PC-3 (cell line): ENCODE measurements at regions of chr14 and their contacts with region 1.

Region 1: DNA sequence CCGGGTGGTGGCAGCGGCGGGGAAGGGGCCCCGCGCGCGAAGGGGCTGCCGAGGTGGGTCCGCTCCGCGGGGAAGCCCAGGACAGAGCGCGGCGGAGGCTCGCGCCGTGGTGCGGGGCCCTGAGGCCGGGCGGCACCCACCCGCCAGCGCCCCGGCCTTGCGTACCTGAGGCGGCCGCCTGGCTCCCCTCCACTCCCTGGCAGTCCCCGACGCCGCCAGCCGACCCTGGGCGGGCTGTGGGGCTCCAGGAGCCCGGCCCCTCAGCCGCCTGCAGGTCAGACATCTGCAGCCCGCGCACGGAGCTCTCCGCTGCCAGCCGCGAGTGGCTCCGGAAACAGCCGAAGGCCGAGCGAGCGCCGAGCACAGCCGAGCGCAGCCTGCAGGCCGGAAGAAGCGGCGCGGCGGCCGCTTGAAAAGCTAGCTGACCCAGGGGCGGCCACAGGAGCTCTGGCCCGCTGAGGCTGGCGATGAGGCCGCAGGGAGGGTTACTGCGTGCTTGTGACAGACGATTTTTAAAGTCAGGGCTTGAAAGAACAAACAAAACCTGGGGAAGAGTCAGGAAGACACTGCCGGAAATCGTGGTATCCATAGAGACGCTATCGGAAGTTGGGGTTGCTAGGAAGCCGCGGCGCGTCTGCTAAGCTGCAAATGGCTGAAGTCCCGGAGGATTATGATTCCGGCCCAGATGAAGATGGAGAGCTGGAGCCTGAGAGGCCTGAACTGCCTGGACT is at the starts of genes SAMD15 and TMED8:
- DNase-seq: peak; percentile 94
- ATAC-seq: peak; percentile 97
- H3K4me3 ChIP-seq: peak within 1 kb of the TSS; percentile 92
- H3K27ac ChIP-seq: peak within 1 kb of the TSS; percentile 51
- H3K4me1 ChIP-seq: peaks cover 27% of the 10 kb centered on the region
- H3K27me3 ChIP-seq: no peaks in the 10 kb centered on the region
- CTCF ChIP-seq: peak; percentile 37; the same call in 1 of the 2 replicates
- total RNA-seq, gene SAMD15: 1.2 and 6.2 TPM in 2 replicates
- total RNA-seq, gene TMED8: 16.8 and 17.8 TPM in 2 replicates

Region 2: DNA sequence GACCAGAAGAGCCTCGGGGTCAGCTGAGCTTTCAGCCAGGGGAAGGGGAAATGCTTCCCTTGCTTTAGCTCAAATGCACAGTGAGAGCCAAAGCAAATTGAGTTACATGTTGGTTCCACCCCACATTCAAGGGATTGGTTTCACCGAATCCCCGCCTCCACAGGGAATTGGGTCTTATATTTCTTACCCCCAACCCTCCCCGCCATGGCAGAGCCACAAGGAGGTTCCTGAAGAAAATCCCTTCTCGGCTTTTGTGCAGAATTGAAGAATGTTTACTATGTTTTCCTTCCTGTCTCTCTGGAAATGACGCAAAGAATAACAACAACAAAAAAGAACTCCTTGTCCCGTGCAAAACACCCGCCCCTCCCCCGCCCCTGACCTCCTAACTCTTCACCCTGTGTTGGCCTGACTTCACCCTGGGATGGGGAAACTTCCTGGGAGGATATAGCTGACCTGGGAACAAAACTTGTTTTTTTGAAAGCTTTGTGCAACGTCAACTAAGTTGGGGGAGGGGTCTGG is 300.8 kb before region 1 on chr14:
- CTCF ChIA-PET with region 1: no interaction called
- POLR2A ChIA-PET with region 1: no interaction called
- intact Hi-C with region 1: no loop called
- DNase-seq: no peak
- ATAC-seq: no peak
- H3K4me3 ChIP-seq: no peak overlapping the region
- H3K27ac ChIP-seq: no peak overlapping the region
- H3K4me1 ChIP-seq: peaks cover 18% of the 10 kb centered on the region
- H3K27me3 ChIP-seq: no peaks in the 10 kb centered on the region
- CTCF ChIP-seq: no peak

Region 3: DNA sequence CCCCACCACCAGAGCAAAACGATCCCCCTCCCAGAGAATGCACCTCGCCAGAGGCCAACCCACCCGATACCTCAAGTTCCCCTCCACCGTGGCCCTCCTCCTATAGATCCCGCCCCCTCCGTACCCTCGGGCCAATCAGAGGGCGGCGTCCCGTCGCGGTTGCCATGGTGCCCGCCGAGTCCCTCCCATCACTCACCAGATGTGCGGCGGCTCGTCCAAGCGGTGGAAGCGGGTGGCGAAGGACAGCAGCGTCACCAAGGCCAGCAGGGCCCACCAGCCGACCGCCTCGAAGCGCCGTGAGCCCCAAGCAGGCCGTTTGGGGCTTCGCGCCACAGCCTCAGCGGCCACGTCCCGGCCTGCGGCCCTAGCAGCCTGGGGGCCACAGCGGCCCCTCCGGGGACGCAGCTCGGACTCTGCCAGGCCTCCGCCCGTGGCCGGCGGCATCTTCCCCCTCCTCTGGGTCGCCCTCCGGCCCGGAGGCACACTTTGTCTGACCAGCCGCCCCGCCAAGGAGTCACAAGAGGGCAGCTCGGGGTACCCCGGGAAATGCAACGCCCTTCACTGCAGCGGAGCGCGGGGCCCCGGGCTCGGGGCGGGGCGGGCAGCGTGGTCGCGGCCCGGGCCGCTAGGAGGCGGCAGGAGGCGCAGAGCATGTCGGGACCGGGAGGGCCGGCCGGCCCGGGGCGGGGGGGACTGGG is 56.5 kb before region 1 on chr14 and contains the start of gene POMT2:
- CTCF ChIA-PET with region 1: interaction called, 4 read pairs
- POLR2A ChIA-PET with region 1: interaction called, 5 read pairs
- intact Hi-C with region 1: loop called (anchors 2 kb)
- DNase-seq: peak; percentile 98
- ATAC-seq: peak; percentile 66
- H3K4me3 ChIP-seq: peak within 1 kb of the TSS; percentile 86
- H3K27ac ChIP-seq: peak within 1 kb of the TSS; percentile 88
- H3K4me1 ChIP-seq: peaks cover 42% of the 10 kb centered on the region
- H3K27me3 ChIP-seq: no peaks in the 10 kb centered on the region
- CTCF ChIP-seq: peak; percentile 52; the same call in 1 of the 2 replicates
- total RNA-seq, gene POMT2: 57.6 and 67.6 TPM in 2 replicates

Region 4: DNA sequence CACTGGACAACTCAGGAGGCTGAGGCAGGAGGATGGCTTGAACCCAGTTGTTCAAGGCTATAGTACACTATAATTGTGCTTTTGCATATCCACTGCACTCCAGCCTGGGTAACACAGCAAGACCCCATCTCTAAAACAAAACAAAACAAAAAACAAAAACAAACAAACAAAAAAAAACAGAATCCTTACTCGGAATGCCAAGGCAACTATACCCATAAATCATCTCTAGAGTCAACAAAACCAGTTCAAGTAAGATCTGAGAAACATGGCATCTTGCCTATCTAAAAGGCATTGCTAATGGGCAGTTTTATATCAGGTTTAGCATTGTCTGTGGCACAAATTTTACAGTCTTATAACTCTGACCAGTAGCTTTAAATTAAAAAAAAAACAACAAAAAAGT is 12.0 kb after region 1 on chr14:
- CTCF ChIA-PET with region 1: interaction called, 19 read pairs
- POLR2A ChIA-PET with region 1: no interaction called
- intact Hi-C with region 1: no loop called
- DNase-seq: no peak
- ATAC-seq: no peak
- H3K4me3 ChIP-seq: no peak overlapping the region
- H3K27ac ChIP-seq: no peak overlapping the region
- H3K4me1 ChIP-seq: no peaks in the 10 kb centered on the region
- H3K27me3 ChIP-seq: no peaks in the 10 kb centered on the region
- CTCF ChIP-seq: no peak

Region 5: DNA sequence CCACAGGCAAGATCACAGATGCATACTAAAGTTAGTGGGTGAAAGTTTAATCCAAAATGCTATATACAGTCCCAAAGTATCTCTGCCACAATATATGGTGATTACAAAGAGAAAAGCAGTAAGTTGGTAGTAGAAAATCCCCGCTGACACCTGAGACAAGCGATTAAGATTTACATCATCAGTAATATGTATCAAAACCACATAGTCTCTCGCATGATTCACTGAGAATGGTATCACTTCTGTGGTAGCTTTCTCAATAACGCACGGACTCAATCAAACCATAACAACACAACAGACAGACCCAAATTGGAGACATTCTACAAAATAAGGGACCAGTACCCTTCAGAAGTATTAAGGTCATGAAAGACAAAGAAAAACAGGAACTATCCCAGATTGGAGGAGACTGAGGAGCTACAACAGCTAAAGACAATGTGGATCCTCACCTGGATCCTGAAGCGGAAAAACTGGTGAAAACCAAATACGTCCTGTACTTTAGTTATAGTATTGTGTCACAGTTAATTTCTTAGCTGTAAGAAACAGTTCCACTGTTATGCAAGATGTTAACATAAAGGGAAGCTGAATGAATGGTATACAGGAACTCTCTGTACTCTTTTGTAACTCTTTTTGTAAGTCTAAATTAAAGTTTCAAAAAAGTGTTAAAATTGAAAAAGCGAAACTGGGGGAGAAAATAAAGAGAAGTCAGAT is 188.5 kb after region 1 on chr14:
- CTCF ChIA-PET with region 1: no interaction called
- POLR2A ChIA-PET with region 1: interaction called, 27 read pairs
- intact Hi-C with region 1: no loop called
- DNase-seq: no peak
- ATAC-seq: no peak
- H3K4me3 ChIP-seq: no peak overlapping the region
- H3K27ac ChIP-seq: no peak overlapping the region
- H3K4me1 ChIP-seq: peaks cover 11% of the 10 kb centered on the region
- H3K27me3 ChIP-seq: no peaks in the 10 kb centered on the region
- CTCF ChIP-seq: no peak